Endothelial cell of umbilical vein (primary cell): ENCODE measurements at regions of chr11 and their contacts with region 1.

Region 1: GRCh38 chr11:14789879-14790484 is 102.0 kb downstream of the CYP2R1 start:
- DNase-seq: peak; percentile 27
- H3K4me3 ChIP-seq: no peak overlapping the region
- H3K27ac ChIP-seq: no peak overlapping the region
- H3K4me1 ChIP-seq: peaks cover 21% of the 10 kb centered on the region
- H3K27me3 ChIP-seq: no peaks in the 10 kb centered on the region
- CTCF ChIP-seq: peak; percentile 20 to 26
- POLR2A ChIP-seq: no peak

Region 2: DNA sequence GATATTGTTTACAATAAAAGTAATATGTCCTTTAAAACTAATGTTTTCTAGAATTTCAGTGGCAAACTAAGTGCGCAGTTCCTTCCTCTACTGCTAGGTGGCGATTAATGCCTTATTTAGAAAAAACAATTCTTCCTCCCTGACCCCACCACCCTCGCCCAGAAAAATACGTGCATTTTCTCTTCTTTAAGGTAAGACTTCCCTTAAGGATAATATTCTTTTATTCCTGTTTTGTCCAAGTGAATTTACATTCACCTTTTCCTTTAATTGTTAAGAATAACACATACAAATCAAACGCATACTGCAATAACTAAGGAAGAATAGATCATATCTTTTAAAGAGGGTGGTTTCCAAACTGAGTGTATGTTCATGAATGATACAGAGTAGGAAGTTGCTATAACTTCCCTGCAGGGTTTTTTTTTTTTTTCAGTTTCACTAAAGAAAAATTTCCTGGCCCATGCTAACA is 252.8 kb before region 1 on chr11:
- CTCF ChIA-PET with region 1: interaction called, 3 read pairs
- POLR2A ChIA-PET with region 1: no interaction called
- dilution Hi-C with region 1: no loop called
- intact Hi-C with region 1: loop called (anchors 1 kb)
- DNase-seq: peak; percentile 60
- H3K4me3 ChIP-seq: no peak overlapping the region
- H3K27ac ChIP-seq: no peak overlapping the region
- H3K4me1 ChIP-seq: no peaks in the 10 kb centered on the region
- H3K27me3 ChIP-seq: peaks cover 9 to 10% of the 10 kb centered on the region in 2 experiments
- CTCF ChIP-seq: peak; percentile 53 to 62
- POLR2A ChIP-seq: no peak

Region 3: GRCh38 chr11:14764579-14765527 is 25.1 kb before region 1 on chr11:
- CTCF ChIA-PET with region 1: interaction called, 11 read pairs
- POLR2A ChIA-PET with region 1: no interaction called
- dilution Hi-C with region 1: no loop called
- intact Hi-C with region 1: no loop called
- DNase-seq: peak; percentile 27
- H3K4me3 ChIP-seq: no peak overlapping the region
- H3K27ac ChIP-seq: no peak overlapping the region
- H3K4me1 ChIP-seq: peaks cover 2% of the 10 kb centered on the region
- H3K27me3 ChIP-seq: peaks cover 0 to 1% of the 10 kb centered on the region in 2 experiments
- CTCF ChIP-seq: no peak
- POLR2A ChIP-seq: no peak

Region 4: DNA sequence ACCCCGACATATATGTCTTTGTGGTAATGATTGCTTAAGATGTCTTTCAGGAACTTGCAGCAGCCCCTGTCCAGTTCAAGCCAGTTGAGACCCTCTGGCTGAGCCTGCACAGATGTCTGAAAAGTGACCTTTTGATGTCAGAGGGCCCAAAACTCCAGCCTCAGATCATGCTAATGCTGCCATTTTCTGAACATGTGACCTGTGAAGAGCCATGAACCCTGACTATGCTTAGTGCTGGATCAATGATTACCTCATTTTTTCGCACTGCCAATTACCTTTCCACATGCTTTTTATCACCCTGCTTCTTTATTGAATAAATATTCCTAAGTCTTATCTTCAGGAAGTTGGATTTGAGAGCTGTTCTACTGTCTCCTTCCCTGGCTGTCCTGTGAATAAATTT is 108.9 kb after region 1 on chr11:
- CTCF ChIA-PET with region 1: interaction called, 833 read pairs
- POLR2A ChIA-PET with region 1: no interaction called
- dilution Hi-C with region 1: no loop called
- intact Hi-C with region 1: no loop called
- DNase-seq: no peak
- H3K4me3 ChIP-seq: no peak overlapping the region
- H3K27ac ChIP-seq: no peak overlapping the region
- H3K4me1 ChIP-seq: peaks cover 7% of the 10 kb centered on the region
- H3K27me3 ChIP-seq: no peaks in the 10 kb centered on the region
- CTCF ChIP-seq: no peak
- POLR2A ChIP-seq: no peak

Region 5: DNA sequence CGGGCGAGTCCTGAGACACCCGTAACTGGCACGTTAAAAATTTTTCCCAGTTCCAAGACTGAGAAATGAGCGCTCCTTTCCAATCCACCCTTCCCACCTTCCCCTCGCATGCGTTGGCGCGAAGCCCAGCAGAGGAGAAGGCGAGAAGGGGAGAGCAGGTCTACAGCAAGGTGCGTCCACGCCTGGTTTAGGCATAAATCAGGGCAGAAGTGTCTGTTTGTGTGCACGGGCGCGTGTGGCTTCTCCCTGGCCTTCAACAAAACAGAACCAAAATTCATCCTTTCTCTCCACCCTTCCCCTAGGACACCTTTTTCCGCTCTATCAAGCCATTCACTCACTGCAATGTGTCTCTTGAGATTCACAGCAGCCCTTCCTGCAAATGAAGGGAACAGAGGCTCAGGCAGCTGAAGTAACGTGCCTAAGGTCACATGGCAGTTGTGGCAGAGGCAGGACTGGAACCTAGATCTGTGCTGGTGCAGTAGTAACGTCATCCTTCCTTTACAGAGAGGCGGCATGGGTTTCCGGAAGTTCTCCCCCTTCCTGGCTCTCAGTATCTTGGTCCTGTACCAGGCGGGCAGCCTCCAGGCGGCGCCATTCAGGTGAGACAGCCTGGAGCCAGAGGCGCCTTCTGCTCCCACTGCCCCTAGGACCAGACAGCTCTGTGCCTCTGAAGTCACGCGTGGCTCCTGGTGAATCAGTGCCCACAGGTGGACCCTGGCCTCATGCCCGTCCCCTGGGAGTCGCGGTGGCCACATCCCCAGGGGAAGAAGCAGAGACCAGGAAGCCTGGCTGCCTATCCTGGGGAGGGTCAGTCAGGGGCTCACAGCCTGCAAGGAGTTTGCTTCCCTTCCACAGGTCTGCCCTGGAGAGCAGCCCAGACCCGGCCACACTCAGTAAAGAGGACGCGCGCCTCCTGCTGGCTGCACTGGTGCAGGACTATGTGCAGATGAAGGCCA is 284.5 kb after region 1 on chr11:
- CTCF ChIA-PET with region 1: interaction called, 52 read pairs
- POLR2A ChIA-PET with region 1: no interaction called
- dilution Hi-C with region 1: no loop called
- intact Hi-C with region 1: loop called (anchors 1 kb)
- DNase-seq: peak; percentile 53
- H3K4me3 ChIP-seq: no peak overlapping the region
- H3K27ac ChIP-seq: no peak overlapping the region
- H3K4me1 ChIP-seq: no peaks in the 10 kb centered on the region
- H3K27me3 ChIP-seq: peaks cover 15 to 18% of the 10 kb centered on the region in 2 experiments
- CTCF ChIP-seq: peak; percentile 65 to 81
- POLR2A ChIP-seq: no peak

Region 6: GRCh38 chr11:15208378-15209222 is 418.6 kb after region 1 on chr11:
- CTCF ChIA-PET with region 1: interaction called, 9 read pairs
- POLR2A ChIA-PET with region 1: no interaction called
- dilution Hi-C with region 1: no loop called
- intact Hi-C with region 1: loop called (anchors 1 kb)
- DNase-seq: peak; percentile 34
- H3K4me3 ChIP-seq: no peak overlapping the region
- H3K27ac ChIP-seq: no peak overlapping the region
- H3K4me1 ChIP-seq: no peaks in the 10 kb centered on the region
- H3K27me3 ChIP-seq: no peaks in the 10 kb centered on the region
- CTCF ChIP-seq: peak; percentile 65 to 92
- POLR2A ChIP-seq: no peak